ENCODE measurements at regions of chr6 and their contacts with region 1.

Region 1: GRCh38 chr6:10429638-10430427 is 15.0 kb upstream of the TFAP2A start:
- DNase-seq: peak; percentile 50
- ATAC-seq: peak; percentile 53
- H3K4me3 ChIP-seq: no peak overlapping the region
- H3K27ac ChIP-seq: no peak overlapping the region
- H3K4me1 ChIP-seq: peaks cover 7% of the 10 kb centered on the region
- H3K27me3 ChIP-seq: peaks cover 0 to 19% of the 10 kb centered on the region in 2 experiments; a peak in 3 of 5 replicates
- CTCF ChIP-seq: peak; percentile 79
- EP300 ChIP-seq: no peak
- POLR2A ChIP-seq: no peak
- RAD21 ChIP-seq: 0 out of 2 replicates have a peak, but pooled peaks have one; percentile 36

Region 2: GRCh38 chr6:8707956-8708772 is 1721.7 kb before region 1 on chr6:
- CTCF ChIA-PET with region 1: no interaction called
- POLR2A ChIA-PET with region 1: no interaction called
- in situ Hi-C with region 1: loop called (anchors 10 kb)
- intact Hi-C with region 1: loop called (anchors 5 kb)
- DNase-seq: peak; percentile 27
- ATAC-seq: peak; percentile 71
- H3K4me3 ChIP-seq: no peak overlapping the region
- H3K27ac ChIP-seq: no peak overlapping the region
- H3K4me1 ChIP-seq: no peaks in the 10 kb centered on the region
- H3K27me3 ChIP-seq: no peaks in the 10 kb centered on the region; a peak in 1 of 5 replicates
- CTCF ChIP-seq: peak; percentile 46
- EP300 ChIP-seq: no peak
- POLR2A ChIP-seq: no peak
- RAD21 ChIP-seq: no peak

Region 3: DNA sequence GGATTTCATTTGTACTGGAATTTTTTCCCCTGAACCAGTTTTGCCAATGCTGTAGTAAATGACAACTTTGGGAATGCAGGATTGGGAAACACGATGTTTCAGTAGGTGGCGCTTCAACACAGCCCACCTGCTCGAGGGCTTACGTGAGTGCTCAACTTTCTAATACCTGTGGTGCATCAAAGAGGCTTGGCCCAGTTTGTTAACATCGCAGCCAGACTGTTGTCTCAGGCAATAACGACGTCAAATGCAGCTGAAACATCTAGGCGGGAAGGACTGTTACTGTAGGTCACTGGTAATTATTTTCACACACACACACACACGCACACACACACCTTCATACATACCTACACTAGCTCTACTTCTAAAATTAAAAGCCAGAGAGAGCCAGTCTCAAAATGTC is 1179.0 kb before region 1 on chr6:
- CTCF ChIA-PET with region 1: interaction called, 14 read pairs
- POLR2A ChIA-PET with region 1: no interaction called
- in situ Hi-C with region 1: loop called (anchors 10 kb)
- intact Hi-C with region 1: loop called (anchors 1 kb)
- DNase-seq: peak; percentile 16
- ATAC-seq: peak; percentile 82
- H3K4me3 ChIP-seq: no peak overlapping the region
- H3K27ac ChIP-seq: no peak overlapping the region
- H3K4me1 ChIP-seq: no peaks in the 10 kb centered on the region
- H3K27me3 ChIP-seq: no peaks in the 10 kb centered on the region; a peak in 1 of 5 replicates
- CTCF ChIP-seq: peak; percentile 82
- EP300 ChIP-seq: no peak
- POLR2A ChIP-seq: no peak
- RAD21 ChIP-seq: no peak

Region 4: GRCh38 chr6:9540534-9541126 is 889.2 kb before region 1 on chr6:
- CTCF ChIA-PET with region 1: interaction called, 4 read pairs
- POLR2A ChIA-PET with region 1: no interaction called
- in situ Hi-C with region 1: loop called (anchors 25 kb)
- intact Hi-C with region 1: loop called (anchors 2 kb)
- DNase-seq: peak; percentile 20
- ATAC-seq: no peak; the same call in 2 of the 3 replicates
- H3K4me3 ChIP-seq: no peak overlapping the region
- H3K27ac ChIP-seq: no peak overlapping the region
- H3K4me1 ChIP-seq: no peaks in the 10 kb centered on the region
- H3K27me3 ChIP-seq: no peaks in the 10 kb centered on the region; a peak in 1 of 5 replicates
- CTCF ChIP-seq: peak; percentile 50
- EP300 ChIP-seq: no peak
- POLR2A ChIP-seq: no peak
- RAD21 ChIP-seq: no peak

Region 5: DNA sequence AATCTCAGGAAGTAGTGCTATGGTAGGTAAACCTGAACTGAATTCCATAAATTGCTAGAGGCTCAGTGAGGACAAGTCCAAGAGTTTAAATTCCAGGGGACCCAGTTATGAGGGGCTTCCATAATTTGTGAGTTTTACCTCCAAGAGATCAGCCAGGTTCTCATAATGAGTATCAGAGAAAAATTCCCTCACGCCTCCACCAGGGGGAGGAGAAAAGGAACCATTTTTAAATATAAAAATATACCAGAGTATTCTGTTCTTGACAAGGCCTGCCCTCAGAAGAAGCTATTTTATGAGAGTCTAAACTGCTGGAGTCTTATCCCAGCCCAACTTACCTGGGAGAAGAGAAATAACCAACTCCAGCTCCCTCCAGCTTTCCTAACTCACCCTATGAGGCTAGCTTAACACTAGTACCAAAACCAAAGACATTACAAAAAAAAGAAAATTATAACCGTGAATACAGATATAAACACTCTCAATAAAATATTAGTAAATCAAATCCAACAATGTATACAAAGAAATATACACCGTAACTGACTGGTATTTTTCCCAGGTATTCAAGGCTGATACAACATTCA is 173.6 kb before region 1 on chr6:
- CTCF ChIA-PET with region 1: interaction called, 9 read pairs
- POLR2A ChIA-PET with region 1: no interaction called
- in situ Hi-C with region 1: loop called (anchors 10 kb)
- intact Hi-C with region 1: loop called (anchors 1 kb)
- DNase-seq: no peak
- ATAC-seq: 0 out of 3 replicates have a peak, but pooled peaks have one; percentile 33
- H3K4me3 ChIP-seq: no peak overlapping the region
- H3K27ac ChIP-seq: no peak overlapping the region
- H3K4me1 ChIP-seq: no peaks in the 10 kb centered on the region
- H3K27me3 ChIP-seq: no peaks in the 10 kb centered on the region
- CTCF ChIP-seq: no peak
- EP300 ChIP-seq: no peak
- POLR2A ChIP-seq: no peak
- RAD21 ChIP-seq: no peak

Region 6: DNA sequence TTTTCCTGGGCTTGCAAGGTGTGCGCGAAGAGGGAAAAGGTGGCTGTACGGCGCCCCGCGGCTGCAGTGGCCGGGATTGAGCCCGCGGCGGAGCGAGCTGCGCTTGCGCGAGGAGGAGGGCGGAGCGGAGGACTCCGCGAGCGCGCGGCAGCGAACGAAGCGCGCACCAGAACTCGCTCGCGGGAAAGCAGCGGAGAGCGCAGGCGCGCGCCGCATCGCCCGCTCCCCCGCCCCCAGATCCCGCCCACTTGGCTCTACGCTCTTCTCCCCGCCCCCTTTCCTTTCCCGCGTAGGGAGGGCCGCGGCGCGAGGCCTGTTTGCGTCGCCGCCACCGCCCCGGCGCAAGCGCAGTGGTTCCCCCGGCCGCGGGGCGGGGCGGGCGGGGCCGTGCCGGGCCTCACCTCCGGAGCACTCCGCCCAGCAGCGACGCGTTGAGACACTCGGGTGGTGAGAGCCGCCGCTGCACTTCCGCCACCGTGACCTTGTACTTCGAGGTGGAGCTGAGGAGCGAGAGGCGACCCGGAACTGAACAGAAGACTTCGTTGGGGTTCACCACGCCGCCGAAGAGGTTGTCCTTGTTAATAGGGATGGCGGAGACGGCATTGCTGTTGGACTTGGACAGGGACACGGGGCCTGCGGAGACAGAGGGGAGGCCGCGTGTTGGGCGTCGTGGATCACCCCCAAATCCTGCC is 25.6 kb before region 1 on chr6:
- CTCF ChIA-PET with region 1: no interaction called
- POLR2A ChIA-PET with region 1: no interaction called
- in situ Hi-C with region 1: no loop called
- intact Hi-C with region 1: no loop called
- DNase-seq: no peak
- ATAC-seq: no peak
- H3K4me3 ChIP-seq: no peak overlapping the region
- H3K27ac ChIP-seq: no peak overlapping the region
- H3K4me1 ChIP-seq: no peaks in the 10 kb centered on the region
- H3K27me3 ChIP-seq: peaks cover 5 to 68% of the 10 kb centered on the region in 2 experiments; a peak in 4 of 5 replicates
- CTCF ChIP-seq: no peak
- EP300 ChIP-seq: no peak
- POLR2A ChIP-seq: no peak
- RAD21 ChIP-seq: no peak